ENCODE measurements at regions of chr20 and their contacts with region 1.

Region 1: GRCh38 chr20:56392282-56393137 is at the start of gene CSTF1:
- DNase-seq: peak; percentile 98 to 100 (median 99)
- ATAC-seq: peak; percentile 83
- H3K4me3 ChIP-seq: peak within 1 kb of the TSS; percentile 88
- H3K4me3 Mint-ChIP-seq: no peak within 1 kb of the TSS
- H3K27ac ChIP-seq: peak within 1 kb of the TSS; percentile 89 to 93
- H3K27ac Mint-ChIP-seq: no peak within 1 kb of the TSS
- H3K4me1 ChIP-seq: peaks cover 24% of the 10 kb centered on the region
- H3K4me1 Mint-ChIP-seq: peaks cover 28% of the 10 kb centered on the region
- H3K27me3 ChIP-seq: no peaks in the 10 kb centered on the region
- H3K27me3 Mint-ChIP-seq: no peaks in the 10 kb centered on the region
- CTCF ChIP-seq: no peak
- total RNA-seq, gene CSTF1: 20.7 to 21.8 TPM

Region 2: DNA sequence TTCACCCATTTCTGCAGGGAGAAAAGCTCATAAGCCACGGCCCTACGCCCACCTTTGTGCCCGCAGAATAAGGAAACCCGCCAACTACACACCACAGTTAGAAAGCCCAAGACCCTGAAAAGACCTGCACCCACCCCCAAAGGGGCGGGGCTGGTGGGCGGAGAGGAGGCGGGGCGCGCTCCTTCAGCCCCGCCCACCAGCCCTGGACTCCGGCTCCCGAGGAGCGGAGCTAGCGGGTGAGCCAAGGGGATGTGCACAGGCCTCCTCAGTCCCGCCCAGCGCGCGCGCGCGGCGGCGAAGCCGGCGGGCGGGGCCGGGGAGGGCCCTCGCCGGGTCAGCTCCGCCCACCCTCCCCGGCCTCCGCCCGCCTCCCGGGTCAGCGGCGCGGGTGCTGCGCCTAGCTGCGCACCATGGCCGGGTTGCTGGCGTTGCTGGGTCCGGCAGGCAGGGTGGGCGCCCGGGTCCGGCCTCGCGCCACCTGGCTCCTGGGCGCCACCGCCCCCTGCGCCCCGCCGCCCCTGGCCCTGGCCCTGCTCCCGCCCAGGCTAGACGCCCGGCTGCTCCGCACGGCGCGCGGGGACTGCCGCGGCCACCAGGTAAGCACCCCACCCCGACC is 33.8 kb before region 1 on chr20 and contains the start of gene FAM210B:
- CTCF ChIA-PET with region 1: no interaction called
- POLR2A ChIA-PET with region 1: interaction called, 40 read pairs
- intact Hi-C with region 1: loop called in 1 of 2 experiments (anchors 1 kb)
- DNase-seq: peak; percentile 62 to 93 (median 81)
- ATAC-seq: peak; percentile 99
- H3K4me3 ChIP-seq: peak within 1 kb of the TSS; percentile 86
- H3K4me3 Mint-ChIP-seq: peak within 1 kb of the TSS; percentile 94
- H3K27ac ChIP-seq: no peak within 1 kb of the TSS
- H3K27ac Mint-ChIP-seq: peak within 1 kb of the TSS; percentile 76
- H3K4me1 ChIP-seq: peaks cover 21% of the 10 kb centered on the region
- H3K4me1 Mint-ChIP-seq: peaks cover 29% of the 10 kb centered on the region
- H3K27me3 ChIP-seq: no peaks in the 10 kb centered on the region
- H3K27me3 Mint-ChIP-seq: no peaks in the 10 kb centered on the region
- CTCF ChIP-seq: no peak
- total RNA-seq, gene FAM210B: 14.4 to 14.7 TPM

Region 3: DNA sequence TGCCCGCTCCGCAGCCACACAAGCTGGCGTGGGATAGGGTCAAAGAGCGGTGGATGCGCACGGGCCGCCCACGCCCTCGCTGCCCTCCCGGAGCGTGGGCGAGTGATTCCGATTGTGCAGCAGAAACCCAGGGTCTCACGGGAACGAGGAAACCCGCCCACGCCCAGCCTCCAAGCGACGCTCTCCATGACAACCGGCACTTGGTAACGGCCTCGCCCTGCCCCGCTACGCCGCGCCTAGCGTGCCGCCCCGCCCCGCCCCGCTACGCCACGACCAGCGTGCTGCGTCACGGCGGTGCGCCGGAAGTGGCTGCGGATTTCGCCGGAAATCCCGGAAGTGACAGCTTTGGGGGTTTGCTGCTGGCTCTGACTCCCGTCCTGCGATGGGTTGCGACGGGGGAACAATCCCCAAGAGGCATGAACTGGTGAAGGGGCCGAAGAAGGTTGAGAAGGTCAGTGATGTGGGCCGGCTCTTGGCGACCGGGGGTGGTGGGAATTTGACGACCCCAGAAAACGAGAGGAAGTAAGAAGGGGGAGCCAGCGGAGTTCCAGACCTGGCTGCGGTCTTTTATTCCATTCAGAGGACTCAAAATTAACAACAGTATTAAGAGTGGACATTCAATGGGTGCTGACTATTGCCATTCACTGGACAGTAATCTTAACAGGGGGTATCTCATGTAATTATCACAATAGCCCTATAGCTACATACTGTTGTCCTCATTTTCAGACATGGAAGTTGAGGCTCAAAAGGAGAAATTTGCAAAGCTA is 76.0 kb after region 1 on chr20 and contains the start of gene RTF2:
- CTCF ChIA-PET with region 1: interaction called, 6 read pairs
- POLR2A ChIA-PET with region 1: interaction called, 18 read pairs
- intact Hi-C with region 1: loop called in 1 of 2 experiments (anchors 1 kb)
- DNase-seq: peak; percentile 91 to 98 (median 94)
- ATAC-seq: peak; percentile 97
- H3K4me3 ChIP-seq: peak within 1 kb of the TSS; percentile 91
- H3K4me3 Mint-ChIP-seq: peak within 1 kb of the TSS; percentile 99
- H3K27ac ChIP-seq: peak within 1 kb of the TSS; percentile 90 to 93
- H3K27ac Mint-ChIP-seq: peak within 1 kb of the TSS; percentile 98
- H3K4me1 ChIP-seq: peaks cover 38% of the 10 kb centered on the region
- H3K4me1 Mint-ChIP-seq: peaks cover 43% of the 10 kb centered on the region
- H3K27me3 ChIP-seq: no peaks in the 10 kb centered on the region
- H3K27me3 Mint-ChIP-seq: no peaks in the 10 kb centered on the region
- CTCF ChIP-seq: no peak
- total RNA-seq, gene RTF2: 52.7 to 55.2 TPM

Region 4: DNA sequence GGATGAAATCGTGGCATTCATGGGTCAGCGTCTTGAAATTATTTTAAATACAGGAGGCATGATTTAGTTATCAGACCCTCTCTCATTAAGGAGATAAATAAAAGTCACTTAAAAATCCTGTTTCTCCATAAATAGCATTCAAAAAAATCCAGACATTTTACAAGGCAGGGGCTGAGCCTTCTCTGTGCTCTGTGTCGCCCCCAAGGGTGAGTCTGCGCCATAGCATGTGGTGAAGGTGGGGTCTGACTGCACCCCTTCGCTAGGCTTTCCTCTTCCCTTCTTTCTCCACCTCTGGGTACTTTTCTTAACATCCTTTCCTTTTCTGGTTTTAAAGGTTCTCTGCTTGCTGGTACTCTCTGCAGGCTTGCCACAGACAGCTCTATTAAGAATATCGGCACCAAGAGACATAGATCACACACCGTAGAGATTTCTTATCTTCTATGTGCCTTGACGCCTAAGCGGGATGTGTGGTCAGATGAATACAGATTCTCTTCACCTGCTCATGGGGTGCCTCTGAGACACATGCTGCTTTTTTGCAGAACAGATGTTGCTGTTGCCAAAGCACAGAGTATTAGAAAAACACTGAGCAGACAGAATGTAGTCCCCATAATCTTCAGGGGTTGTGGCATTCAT is 112.0 kb after region 1 on chr20:
- CTCF ChIA-PET with region 1: no interaction called
- POLR2A ChIA-PET with region 1: no interaction called
- intact Hi-C with region 1: loop called in 1 of 2 experiments (anchors 2 kb)
- DNase-seq: peak in 7 of 14 experiments; percentile 5 to 51 (median 9)
- ATAC-seq: peak; percentile 89
- H3K4me3 ChIP-seq: no peak overlapping the region
- H3K4me3 Mint-ChIP-seq: peak overlapping the region; percentile 8
- H3K27ac ChIP-seq: no peak overlapping the region
- H3K27ac Mint-ChIP-seq: peak overlapping the region; percentile 72
- H3K4me1 ChIP-seq: peaks cover 8% of the 10 kb centered on the region
- H3K4me1 Mint-ChIP-seq: peaks cover 32% of the 10 kb centered on the region
- H3K27me3 ChIP-seq: no peaks in the 10 kb centered on the region
- H3K27me3 Mint-ChIP-seq: no peaks in the 10 kb centered on the region
- CTCF ChIP-seq: peak; percentile 53